CD8-positive, alpha-beta T cell (primary cell): ENCODE measurements at regions of chr6 and their contacts with region 1.

Region 1: DNA sequence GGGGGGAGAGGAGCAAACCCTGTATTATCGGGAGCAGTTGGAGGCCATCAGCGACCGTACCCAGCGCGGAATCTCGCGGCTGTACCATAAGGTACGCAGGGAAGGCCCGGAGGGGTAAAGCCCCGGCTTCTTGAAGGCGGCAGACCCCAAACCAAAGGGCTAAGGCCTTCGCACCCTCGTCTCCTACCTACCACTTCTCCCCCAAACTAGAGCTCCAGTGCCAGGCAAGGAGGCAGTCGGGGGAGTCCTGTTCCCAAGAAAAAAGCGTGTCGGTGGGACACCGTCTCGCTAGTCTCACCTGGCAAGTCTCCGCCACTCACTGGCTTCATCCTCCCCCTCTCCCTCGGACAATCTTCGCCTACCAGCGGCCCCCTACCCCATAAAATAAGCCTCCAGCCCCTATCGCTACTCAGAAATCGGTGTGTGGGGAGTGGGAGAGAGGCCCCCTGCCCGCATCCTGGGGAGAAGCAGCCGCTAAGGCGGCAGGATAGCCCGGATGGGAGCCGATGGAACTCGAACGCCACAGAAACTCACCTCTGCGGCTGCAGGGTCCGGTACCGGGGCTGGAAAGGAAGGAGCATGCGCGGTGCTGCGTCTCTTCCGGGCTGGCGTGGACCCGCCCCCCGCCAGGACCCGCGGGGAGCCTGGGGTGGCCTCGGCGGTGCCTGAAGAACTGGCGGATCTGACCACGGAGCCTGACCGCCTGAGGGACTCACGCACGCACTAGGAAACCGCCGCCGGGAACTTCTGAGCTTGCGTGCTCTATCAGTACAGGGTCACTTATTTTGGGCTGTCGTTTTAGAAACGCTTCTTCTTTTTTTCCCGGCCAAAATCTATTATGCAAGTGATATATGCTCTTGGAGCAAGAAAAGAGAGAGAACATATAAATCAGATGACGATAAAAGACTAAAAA is at the start of gene RPS10:
- DNase-seq: peak; percentile 79 to 95 (median 89)
- ATAC-seq: peak; percentile 98
- H3K4me3 ChIP-seq: peak within 1 kb of the TSS; percentile 78 to 96
- H3K4me3 Mint-ChIP-seq: peak within 1 kb of the TSS; percentile 96
- H3K27ac ChIP-seq: peak within 1 kb of the TSS; percentile 90 to 95
- H3K27ac Mint-ChIP-seq: peak within 1 kb of the TSS; percentile 97
- H3K4me1 ChIP-seq: peaks cover 23% of the 10 kb centered on the region
- H3K4me1 Mint-ChIP-seq: peaks cover 36% of the 10 kb centered on the region
- H3K27me3 ChIP-seq: no peaks in the 10 kb centered on the region
- H3K27me3 Mint-ChIP-seq: no peaks in the 10 kb centered on the region
- CTCF ChIP-seq: no peak
- total RNA-seq, gene RPS10: 2,721 to 2,770 TPM

Region 2: GRCh38 chr6:34223956-34224940 is 201.5 kb before region 1 on chr6:
- CTCF ChIA-PET with region 1: no interaction called
- POLR2A ChIA-PET with region 1: interaction called, 5 read pairs
- intact Hi-C with region 1: loop called in 1 of 2 experiments (anchors 1 kb)
- DNase-seq: peak; percentile 88 to 99 (median 94)
- ATAC-seq: peak; percentile 98
- H3K4me3 ChIP-seq: peak overlapping the region; percentile 51 to 86
- H3K4me3 Mint-ChIP-seq: peak overlapping the region; percentile 70
- H3K27ac ChIP-seq: peak overlapping the region; percentile 76 to 87
- H3K27ac Mint-ChIP-seq: peak overlapping the region; percentile 89
- H3K4me1 ChIP-seq: peaks cover 14% of the 10 kb centered on the region
- H3K4me1 Mint-ChIP-seq: peaks cover 20% of the 10 kb centered on the region
- H3K27me3 ChIP-seq: no peaks in the 10 kb centered on the region
- H3K27me3 Mint-ChIP-seq: no peaks in the 10 kb centered on the region
- CTCF ChIP-seq: no peak

Region 3: GRCh38 chr6:34392497-34393190 is 33.1 kb before region 1 on chr6 and contains the start of gene NUDT3:
- CTCF ChIA-PET with region 1: interaction called, 4 read pairs
- POLR2A ChIA-PET with region 1: interaction called, 6 read pairs
- intact Hi-C with region 1: loop called (anchors 1 to 2 kb)
- DNase-seq: peak; percentile 90 to 98 (median 93)
- ATAC-seq: peak; percentile 90
- H3K4me3 ChIP-seq: peak within 1 kb of the TSS; percentile 78 to 96
- H3K4me3 Mint-ChIP-seq: peak within 1 kb of the TSS; percentile 72
- H3K27ac ChIP-seq: peak within 1 kb of the TSS; percentile 71 to 75
- H3K27ac Mint-ChIP-seq: peak within 1 kb of the TSS; percentile 94
- H3K4me1 ChIP-seq: peaks cover 15% of the 10 kb centered on the region
- H3K4me1 Mint-ChIP-seq: peaks cover 26% of the 10 kb centered on the region
- H3K27me3 ChIP-seq: no peaks in the 10 kb centered on the region
- H3K27me3 Mint-ChIP-seq: no peaks in the 10 kb centered on the region
- CTCF ChIP-seq: peak; percentile 77
- total RNA-seq, gene NUDT3: 12.5 to 12.9 TPM